Ascending aorta (tissue), 2 donors: ENCODE measurements at regions of chr2 and their contacts with region 1.

Region 1: DNA sequence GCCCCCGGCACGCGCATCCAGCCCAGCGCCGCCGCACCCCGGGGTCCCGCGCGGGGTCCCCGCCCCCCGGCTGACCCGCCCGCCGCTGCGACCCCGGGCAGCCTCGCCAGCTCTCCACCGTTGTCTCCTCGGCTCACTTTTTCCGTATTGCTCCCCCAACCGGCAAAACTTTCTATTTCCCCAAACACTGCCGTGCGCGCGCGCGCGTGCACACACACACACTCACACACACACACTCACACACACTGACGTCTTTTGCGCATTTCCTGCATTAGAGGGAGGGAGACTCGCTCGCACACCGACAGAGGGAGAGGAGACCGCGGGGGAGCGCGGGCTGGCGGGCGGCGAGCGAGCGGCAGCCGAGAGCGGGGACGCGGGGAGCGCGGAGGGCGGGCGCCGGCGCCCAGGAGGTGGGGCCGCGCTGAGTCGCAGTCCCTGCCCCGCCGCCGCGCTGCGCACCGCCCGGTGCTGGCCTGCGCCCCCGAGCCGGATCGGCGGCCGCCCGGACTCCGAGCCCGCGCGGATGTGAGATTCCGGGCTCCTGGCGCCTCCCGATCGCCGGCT is 542 bp upstream of the PRKCE start:
- DNase-seq: peak; percentile 86 to 98
- H3K4me3 ChIP-seq: peak overlapping the region; percentile 79 to 92
- H3K27ac ChIP-seq: peak overlapping the region; percentile 95 to 96
- H3K4me1 ChIP-seq: peaks cover 2 to 10% of the 10 kb centered on the region in 2 donors
- H3K27me3 ChIP-seq: no peaks in the 10 kb centered on the region
- CTCF ChIP-seq: peak; percentile 21 to 64 (median 47)

Region 2: DNA sequence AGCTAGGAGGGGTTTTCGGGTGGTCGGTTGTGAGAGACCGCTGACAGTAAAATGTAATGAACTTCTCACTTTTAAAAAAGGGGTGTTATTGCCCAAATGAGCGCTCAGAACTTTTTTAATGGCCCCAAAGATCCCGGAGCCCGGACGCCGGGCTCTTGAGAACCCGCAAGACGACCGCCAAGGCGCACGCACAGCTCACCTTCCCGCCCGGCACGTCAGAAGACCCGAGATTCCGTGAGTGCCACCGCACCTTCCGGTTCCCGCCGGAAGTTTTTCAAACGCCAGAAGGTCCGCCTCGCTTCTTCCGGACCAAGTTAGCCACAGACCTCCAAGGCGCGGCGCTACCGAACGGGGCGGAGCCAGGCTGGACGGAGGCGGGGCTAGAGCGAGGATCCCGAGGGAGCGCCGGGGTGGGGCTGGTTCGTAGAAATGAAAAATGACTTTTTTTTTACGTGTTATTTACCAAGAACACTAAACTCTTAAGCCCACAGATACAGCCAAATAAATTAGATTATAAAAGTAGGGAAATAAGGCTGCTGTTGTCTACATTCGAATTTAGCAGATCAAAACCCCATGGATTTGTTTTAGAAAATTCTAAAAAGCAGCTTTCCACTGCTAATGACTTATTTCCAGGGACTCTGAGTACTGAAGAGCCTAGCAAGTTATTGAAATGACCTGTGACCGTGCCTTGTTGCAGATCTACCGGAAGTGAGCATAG is 39.8 kb before region 1 on chr2 and contains the start of gene SRBD1:
- intact Hi-C with region 1: loop called (anchors 2 kb)
- DNase-seq: peak; percentile 80 to 96
- H3K4me3 ChIP-seq: peak within 1 kb of the TSS; percentile 71 to 73
- H3K27ac ChIP-seq: peak within 1 kb of the TSS; percentile 74 to 88
- H3K4me1 ChIP-seq: peaks cover 0 to 3% of the 10 kb centered on the region in 2 donors
- H3K27me3 ChIP-seq: no peaks in the 10 kb centered on the region
- CTCF ChIP-seq: no peak
- total RNA-seq, gene SRBD1: 7.6 TPM

Region 3: GRCh38 chr2:45806563-45807358 is 155.8 kb after region 1 on chr2:
- intact Hi-C with region 1: no loop called
- DNase-seq: no peak
- H3K4me3 ChIP-seq: no peak overlapping the region
- H3K27ac ChIP-seq: no peak overlapping the region
- H3K4me1 ChIP-seq: no peaks in the 10 kb centered on the region
- H3K27me3 ChIP-seq: no peaks in the 10 kb centered on the region
- CTCF ChIP-seq: no peak

Region 4: DNA sequence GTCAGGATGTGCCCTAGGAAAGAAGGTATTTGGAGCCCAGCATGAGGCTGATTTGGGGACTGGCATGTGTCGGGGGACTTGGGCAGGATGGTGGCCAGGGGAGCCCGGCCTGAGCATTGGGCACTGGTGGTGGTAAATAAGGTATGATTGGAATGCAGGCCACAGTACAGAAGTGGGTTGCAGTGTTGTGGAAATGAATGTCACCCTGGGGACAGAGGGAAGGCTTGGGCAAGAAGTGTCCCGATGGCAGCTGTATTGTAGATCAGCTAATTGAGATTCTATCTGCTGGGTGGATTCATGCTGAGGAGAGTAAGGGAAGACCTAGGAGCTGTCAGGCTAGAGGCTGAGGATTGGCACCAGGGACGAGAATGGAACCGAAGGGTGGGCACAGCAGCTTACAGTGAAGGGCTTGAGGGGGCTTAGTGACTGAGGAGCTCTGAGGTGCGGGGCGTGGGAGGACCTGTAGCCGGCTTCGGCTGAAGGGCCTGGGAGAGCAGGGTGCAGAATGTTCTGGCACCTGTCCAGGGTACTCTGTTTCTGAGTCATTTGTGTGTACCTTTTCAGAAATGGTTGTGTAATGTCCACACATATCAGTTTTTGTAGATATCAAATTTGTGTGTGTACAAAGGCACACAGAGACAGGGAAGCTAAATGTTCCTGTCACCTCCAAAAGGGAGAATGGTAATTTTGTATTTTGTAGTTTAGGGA is 170.8 kb after region 1 on chr2:
- intact Hi-C with region 1: loop called (anchors 2 kb)
- DNase-seq: peak; percentile 13 to 77
- H3K4me3 ChIP-seq: no peak overlapping the region
- H3K27ac ChIP-seq: peak overlapping the region; percentile 35 to 83
- H3K4me1 ChIP-seq: peaks cover 22 to 37% of the 10 kb centered on the region in 2 donors
- H3K27me3 ChIP-seq: no peaks in the 10 kb centered on the region
- CTCF ChIP-seq: no peak